Activated CD8-positive, alpha-beta T cell treated with anti-CD3 and anti-CD28 coated beads, Interleukin-2, amount 10 ng/mL, durations not matched to agents 7 days and 5 days (primary cell): ENCODE measurements at regions of chr2 and their contacts with region 1.

Region 1: DNA sequence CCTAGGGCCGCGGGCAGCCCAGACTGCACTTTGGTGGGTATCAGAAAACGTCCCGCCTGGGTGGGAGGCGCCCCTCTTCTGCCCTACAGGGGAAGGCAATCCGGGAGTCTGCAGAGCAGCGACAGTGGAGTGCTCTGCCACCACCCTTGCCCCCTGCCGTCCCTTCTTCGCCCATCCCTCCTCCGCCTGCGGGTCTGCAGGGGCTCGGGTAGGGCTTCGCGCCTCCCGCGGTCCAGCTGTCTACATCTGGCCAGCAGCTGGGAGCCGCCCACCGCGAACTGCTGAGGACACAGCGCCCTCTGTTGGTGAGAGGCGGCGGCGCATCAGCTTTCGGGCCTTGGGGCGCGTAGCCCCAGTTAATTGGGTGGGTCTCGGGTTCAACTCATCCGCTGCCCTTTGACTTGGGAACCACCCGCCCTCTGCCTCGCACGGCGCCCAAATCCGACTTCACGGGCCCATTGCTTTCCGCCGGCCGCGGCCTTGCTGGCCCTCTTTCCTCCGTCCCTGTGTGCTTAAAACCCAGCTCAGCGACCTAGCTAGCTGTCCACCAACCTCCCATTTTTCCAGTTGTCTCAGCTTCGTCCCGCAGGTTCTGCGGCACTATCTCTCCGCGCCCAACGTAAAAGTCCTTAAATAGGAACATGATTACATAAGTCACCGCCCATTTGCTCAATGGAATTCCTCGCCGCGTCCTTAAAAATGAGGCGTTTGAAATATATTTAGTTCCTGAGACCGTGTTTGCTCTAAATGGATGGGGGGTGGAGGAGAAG is 17.6 kb downstream of the WNT10A start:
- DNase-seq: peak; percentile 84
- ATAC-seq: peak; percentile 30
- H3K4me3 Mint-ChIP-seq: peak overlapping the region; percentile 45
- H3K27ac Mint-ChIP-seq: no peak overlapping the region
- H3K4me1 Mint-ChIP-seq: peaks cover 42% of the 10 kb centered on the region
- H3K27me3 Mint-ChIP-seq: peaks cover 54% of the 10 kb centered on the region

Region 2: DNA sequence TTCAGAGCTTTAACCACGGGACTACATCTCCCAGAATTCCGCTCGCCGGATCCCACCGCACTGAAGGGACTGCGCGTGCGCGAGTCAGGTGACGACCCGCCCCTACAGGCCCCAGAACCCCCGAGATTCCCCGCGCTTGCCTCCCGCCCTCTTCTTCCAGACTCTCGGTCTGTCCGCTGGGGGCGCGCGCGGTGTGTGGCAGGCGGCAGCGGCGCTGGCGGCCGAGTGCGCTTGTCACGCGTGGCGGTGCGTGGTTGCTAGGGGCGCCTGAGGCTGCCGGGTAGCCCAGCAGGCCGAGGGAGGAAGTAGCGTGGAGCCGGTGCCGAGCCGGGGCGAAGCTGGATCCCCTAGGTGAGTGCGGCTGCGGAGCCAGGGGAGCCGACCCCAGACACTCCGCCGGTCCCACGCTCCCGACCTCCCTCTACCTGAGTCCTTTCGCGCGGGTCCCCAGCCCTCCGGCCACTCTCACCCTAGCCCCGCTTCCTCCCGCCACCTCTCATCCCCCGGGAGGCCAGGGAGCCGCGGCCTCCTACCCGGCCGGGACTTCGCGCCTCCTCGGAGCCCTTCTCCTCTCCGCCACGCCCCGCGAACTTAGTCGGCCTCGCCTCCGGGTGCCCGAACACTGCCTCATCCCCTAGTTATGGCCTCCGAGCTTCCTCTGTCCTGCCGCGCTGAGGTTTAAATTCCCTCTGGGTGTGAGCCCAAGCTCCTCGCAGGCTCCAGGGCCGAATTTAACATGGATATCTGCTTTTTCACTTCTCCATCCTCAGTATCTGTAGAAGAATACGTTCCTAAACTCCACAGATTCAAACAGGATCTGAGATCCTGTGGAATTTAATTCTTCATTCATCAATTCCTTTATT is 187.4 kb before region 1 on chr2 and contains the start of gene TTLL4:
- CTCF ChIA-PET with region 1: interaction called, 10 read pairs
- POLR2A ChIA-PET with region 1: no interaction called
- DNase-seq: peak; percentile 99
- ATAC-seq: peak; percentile 99
- H3K4me3 Mint-ChIP-seq: peak within 1 kb of the TSS; percentile 96
- H3K27ac Mint-ChIP-seq: peak within 1 kb of the TSS; percentile 76
- H3K4me1 Mint-ChIP-seq: peaks cover 38% of the 10 kb centered on the region
- H3K27me3 Mint-ChIP-seq: peaks cover 2% of the 10 kb centered on the region
- total RNA-seq, gene TTLL4: 25.8 to 27.7 TPM

Region 3: DNA sequence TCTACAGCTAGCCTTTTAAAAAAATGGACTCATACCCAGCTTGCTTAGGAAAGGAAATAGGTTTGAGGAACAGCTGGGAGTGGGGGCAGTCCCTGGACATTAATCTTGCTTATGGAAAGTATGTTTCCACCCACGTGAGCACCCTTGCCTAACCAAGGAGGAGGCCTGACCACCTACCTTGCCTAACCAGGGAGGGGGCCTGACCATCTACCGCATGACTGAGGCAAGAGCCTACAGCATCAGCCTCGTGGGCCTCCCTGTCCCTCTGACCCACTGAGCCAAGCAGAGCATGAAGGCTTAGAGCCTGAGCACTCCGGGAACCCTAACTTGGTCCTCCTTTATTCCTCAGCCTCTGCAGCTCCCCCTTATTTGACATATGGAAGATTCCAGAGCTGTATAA is 86.9 kb before region 1 on chr2:
- CTCF ChIA-PET with region 1: no interaction called
- POLR2A ChIA-PET with region 1: no interaction called
- DNase-seq: no peak
- ATAC-seq: no peak
- H3K4me3 Mint-ChIP-seq: no peak overlapping the region
- H3K27ac Mint-ChIP-seq: no peak overlapping the region
- H3K4me1 Mint-ChIP-seq: peaks cover 1% of the 10 kb centered on the region
- H3K27me3 Mint-ChIP-seq: peaks cover 18% of the 10 kb centered on the region

Region 4: GRCh38 chr2:218876562-218877219 is 21.6 kb before region 1 on chr2:
- CTCF ChIA-PET with region 1: interaction called, 930 read pairs
- POLR2A ChIA-PET with region 1: interaction called, 31 read pairs
- DNase-seq: peak; percentile 76
- ATAC-seq: peak; percentile 14
- H3K4me3 Mint-ChIP-seq: no peak overlapping the region
- H3K27ac Mint-ChIP-seq: no peak overlapping the region
- H3K4me1 Mint-ChIP-seq: peaks cover 31% of the 10 kb centered on the region
- H3K27me3 Mint-ChIP-seq: peaks cover 63% of the 10 kb centered on the region

Region 5: GRCh38 chr2:218908721-218909619 is 10.7 kb after region 1 on chr2:
- CTCF ChIA-PET with region 1: interaction called, 88 read pairs
- POLR2A ChIA-PET with region 1: interaction called, 6 read pairs
- DNase-seq: peak; percentile 92
- ATAC-seq: peak; percentile 97
- H3K4me3 Mint-ChIP-seq: peak overlapping the region; percentile 80
- H3K27ac Mint-ChIP-seq: peak overlapping the region; percentile 82
- H3K4me1 Mint-ChIP-seq: peaks cover 19% of the 10 kb centered on the region
- H3K27me3 Mint-ChIP-seq: peaks cover 21% of the 10 kb centered on the region

Region 6: DNA sequence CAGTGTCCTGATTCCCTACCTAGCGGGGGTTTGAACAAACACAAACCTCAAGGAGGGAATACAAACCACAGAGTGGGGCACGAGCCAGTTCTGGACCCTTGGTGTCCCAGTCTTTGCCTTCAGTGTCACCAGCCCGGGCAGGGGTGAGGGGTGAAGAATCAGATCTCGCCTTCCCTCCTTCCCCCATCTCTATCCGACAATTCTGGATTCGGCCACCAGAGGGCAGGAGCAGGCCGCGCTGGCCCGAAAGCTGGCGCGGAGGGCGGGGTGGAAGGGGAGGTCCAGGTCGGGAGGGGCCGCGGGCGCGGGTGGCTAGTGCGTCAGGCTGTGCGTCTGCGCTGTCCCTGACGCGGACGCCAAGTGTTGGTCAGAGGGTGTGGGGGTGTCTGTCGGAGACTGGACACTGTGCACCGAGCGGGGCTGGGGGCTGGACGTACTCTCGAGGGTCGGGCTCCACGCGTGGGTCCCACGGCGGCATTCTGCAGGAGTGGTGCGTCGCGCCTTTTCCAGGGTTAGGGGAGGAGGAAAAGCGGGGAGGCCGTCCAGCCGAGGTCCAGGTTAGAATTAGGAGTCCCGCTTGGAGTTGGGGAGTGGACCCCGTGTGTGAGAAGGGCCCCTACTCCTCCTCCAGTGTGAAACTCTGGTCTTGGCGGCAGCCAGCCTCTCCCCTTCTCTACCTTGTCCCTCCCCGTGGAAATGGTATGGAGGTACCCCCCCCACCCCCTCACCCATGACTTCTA is 97.8 kb after region 1 on chr2:
- CTCF ChIA-PET with region 1: interaction called, 19 read pairs
- POLR2A ChIA-PET with region 1: no interaction called
- DNase-seq: peak; percentile 81
- ATAC-seq: peak; percentile 61
- H3K4me3 Mint-ChIP-seq: no peak overlapping the region
- H3K27ac Mint-ChIP-seq: no peak overlapping the region
- H3K4me1 Mint-ChIP-seq: peaks cover 8% of the 10 kb centered on the region
- H3K27me3 Mint-ChIP-seq: peaks cover 83% of the 10 kb centered on the region

Region 7: DNA sequence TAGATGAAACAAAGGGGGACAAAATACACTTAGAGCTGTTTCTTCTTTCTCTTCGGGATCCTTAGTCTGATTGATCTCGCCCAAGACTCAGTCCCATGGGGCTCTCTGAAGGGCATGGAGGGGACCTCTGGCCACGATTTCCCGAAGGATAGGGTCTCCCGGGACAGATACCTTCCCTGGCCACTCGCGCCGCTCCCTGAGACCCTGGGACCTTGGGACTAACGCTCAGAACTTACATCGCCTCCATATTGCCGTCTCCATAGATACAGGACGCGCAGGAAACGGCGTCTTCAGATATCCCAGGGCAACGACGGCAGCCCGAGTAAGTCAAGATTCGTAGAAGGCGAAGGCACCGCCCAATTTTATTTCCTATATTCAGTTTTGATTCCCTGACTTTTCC is 143.0 kb after region 1 on chr2 and contains the start of gene CFAP65:
- CTCF ChIA-PET with region 1: no interaction called
- POLR2A ChIA-PET with region 1: no interaction called
- DNase-seq: peak; percentile 39
- ATAC-seq: no peak
- H3K4me3 Mint-ChIP-seq: peak within 1 kb of the TSS; percentile 22
- H3K27ac Mint-ChIP-seq: no peak within 1 kb of the TSS
- H3K4me1 Mint-ChIP-seq: peaks cover 9% of the 10 kb centered on the region
- H3K27me3 Mint-ChIP-seq: peaks cover 44% of the 10 kb centered on the region
- total RNA-seq, gene CFAP65: not detected

Region 8: DNA sequence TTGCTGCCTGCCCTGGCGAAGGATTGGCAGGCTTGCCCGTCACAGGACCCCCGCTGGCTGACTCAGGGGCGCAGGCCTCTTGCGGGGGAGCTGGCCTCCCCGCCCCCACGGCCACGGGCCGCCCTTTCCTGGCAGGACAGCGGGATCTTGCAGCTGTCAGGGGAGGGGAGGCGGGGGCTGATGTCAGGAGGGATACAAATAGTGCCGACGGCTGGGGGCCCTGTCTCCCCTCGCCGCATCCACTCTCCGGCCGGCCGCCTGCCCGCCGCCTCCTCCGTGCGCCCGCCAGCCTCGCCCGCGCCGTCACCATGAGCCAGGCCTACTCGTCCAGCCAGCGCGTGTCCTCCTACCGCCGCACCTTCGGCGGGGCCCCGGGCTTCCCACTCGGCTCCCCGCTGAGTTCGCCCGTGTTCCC is 519.9 kb after region 1 on chr2 and contains the start of gene DES:
- CTCF ChIA-PET with region 1: no interaction called
- POLR2A ChIA-PET with region 1: no interaction called
- DNase-seq: no peak
- ATAC-seq: no peak
- H3K4me3 Mint-ChIP-seq: no peak within 1 kb of the TSS
- H3K27ac Mint-ChIP-seq: no peak within 1 kb of the TSS
- H3K4me1 Mint-ChIP-seq: no peaks in the 10 kb centered on the region
- H3K27me3 Mint-ChIP-seq: peaks cover 43% of the 10 kb centered on the region
- total RNA-seq, gene DES: not detected